WTC11 (cell line): ENCODE measurements at regions of chr2 and their contacts with region 1.

Region 1: DNA sequence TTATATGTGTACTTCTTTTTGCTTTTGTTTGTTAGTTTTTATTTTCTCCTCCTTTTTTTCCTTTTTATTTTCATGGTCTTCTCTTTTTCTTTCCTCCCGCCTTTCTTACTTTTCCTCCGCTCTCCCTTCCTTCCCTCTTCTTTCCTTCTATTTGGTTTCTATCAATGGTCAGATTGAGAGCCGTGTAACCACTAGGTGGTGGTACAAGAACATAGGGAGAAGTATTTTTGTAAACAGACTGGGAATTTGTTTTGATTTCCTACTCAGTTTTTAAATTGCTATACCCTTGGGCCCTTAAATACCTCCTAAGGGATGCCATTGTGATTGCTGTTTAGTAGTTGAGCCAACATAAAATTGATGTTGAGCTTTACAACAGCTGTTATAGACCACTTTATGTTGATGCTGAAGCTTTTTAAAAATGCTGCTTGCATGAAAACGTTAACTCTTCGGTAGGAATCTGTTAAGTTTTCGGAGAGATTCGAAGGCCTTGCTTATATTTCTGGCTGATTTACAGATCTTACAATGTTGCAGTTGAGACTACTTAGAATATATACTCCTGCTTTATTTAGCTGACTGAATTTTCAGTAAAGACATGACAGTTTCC is 124.2 kb downstream of the UBE2E3 start:
- DNase-seq: no peak
- ATAC-seq: peak; percentile 72
- H3K4me3 Mint-ChIP-seq: no peak overlapping the region
- H3K27ac Mint-ChIP-seq: no peak overlapping the region
- H3K4me1 Mint-ChIP-seq: peaks cover 24% of the 10 kb centered on the region
- H3K27me3 Mint-ChIP-seq: no peaks in the 10 kb centered on the region
- CTCF ChIP-seq: 0 out of 2 replicates have a peak, but pooled peaks have one; percentile 22

Region 2: GRCh38 chr2:181457121-181457740 is 352.6 kb after region 1 on chr2 and contains the start of gene ITGA4:
- CTCF ChIA-PET with region 1: interaction called, 10 read pairs
- POLR2A ChIA-PET with region 1: no interaction called
- DNase-seq: peak; percentile 88
- ATAC-seq: peak; percentile 97
- H3K4me3 Mint-ChIP-seq: peak within 1 kb of the TSS; percentile 78
- H3K27ac Mint-ChIP-seq: no peak within 1 kb of the TSS
- H3K4me1 Mint-ChIP-seq: peaks cover 12% of the 10 kb centered on the region
- H3K27me3 Mint-ChIP-seq: peaks cover 62% of the 10 kb centered on the region
- CTCF ChIP-seq: peak; percentile 45
- total RNA-seq, gene ITGA4: 2.0 to 3.0 TPM (median 2.7 TPM) in 3 replicates